ENCODE measurements at regions of chr11 and their contacts with region 1.

Region 1: GRCh38 chr11:94800414-94800813 is 32.3 kb downstream of the AMOTL1 start:
- DNase-seq: peak; percentile 53
- ATAC-seq: peak; percentile 55 to 65

Region 2: DNA sequence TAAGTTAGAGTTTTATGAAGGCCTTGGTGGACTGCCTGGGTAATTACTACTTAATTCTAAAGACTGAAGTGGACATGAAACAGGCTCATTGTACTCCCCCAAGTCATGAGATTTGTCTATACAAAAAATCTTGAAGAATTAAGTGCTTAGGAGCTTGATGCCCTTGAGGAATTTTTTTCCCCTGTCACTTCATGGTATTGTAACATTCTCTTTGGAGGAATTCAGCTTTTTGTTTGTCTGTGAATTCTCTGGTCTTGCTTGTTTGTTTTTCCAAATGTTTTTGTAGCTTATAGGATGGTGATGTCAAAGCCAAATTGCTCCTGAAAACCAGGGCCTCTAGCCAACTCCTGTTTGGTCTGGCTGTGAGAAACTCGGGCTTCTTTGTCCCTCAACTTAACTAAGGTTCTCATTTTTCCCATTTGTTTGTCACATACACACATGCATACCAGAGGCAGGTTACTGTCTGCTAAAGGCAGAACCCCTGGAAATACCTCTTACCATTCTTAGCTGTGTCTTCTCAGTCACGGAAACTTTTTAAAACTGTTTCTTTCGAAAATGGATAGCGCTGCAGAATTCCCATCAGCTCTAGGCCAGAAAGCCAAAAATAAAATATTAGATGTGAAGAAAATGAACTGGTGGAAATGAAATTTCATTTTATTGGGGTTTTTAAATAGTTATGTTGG is 34.6 kb after region 1 on chr11:
- intact Hi-C with region 1: loop called in 1 of 2 experiments (anchors 5 kb)
- DNase-seq: no peak
- ATAC-seq: no peak

Region 3: DNA sequence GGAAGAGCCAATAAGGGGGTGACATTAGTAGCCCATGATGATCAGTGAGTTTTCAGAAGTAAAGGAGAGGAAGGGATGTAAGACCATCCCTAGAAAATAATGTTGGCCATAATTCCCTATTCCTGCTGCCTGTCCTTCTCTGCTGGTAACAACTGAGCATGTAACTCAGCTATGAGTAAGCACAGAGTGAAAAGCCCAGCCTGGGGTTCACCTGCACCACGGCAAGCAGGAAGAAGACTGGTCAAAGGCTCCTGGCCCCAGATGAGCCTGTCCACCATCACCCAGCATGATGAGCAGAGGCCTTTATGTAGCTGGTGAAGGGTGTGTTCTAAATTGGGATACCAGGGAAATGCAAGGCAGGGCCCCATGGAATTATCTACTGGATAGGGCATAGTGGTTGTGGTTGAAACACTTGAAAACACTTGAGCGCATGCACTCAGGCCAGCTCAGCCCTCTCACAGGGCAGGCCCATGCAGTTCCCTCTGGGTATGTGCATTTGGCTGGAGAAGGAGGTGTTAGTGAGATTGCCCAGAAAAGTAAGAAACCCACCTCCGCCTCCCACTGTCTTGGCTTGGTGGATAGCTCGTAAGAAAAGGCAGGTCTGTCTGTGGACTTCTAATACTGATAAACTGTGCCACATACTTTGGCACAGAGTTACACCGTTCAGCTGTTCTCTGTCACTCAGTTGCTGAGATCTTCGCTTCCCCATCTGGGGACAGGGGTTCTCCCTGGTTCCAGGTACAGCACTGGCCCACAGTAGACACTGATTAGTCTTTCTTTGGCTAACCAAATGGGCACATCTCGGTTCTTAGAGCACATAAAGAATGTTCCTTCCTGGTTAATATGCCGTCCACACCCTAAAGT is 54.6 kb after region 1 on chr11:
- intact Hi-C with region 1: loop called in 1 of 2 experiments (anchors 5 kb)
- DNase-seq: no peak
- ATAC-seq: peak; percentile 93 to 95

Region 4: DNA sequence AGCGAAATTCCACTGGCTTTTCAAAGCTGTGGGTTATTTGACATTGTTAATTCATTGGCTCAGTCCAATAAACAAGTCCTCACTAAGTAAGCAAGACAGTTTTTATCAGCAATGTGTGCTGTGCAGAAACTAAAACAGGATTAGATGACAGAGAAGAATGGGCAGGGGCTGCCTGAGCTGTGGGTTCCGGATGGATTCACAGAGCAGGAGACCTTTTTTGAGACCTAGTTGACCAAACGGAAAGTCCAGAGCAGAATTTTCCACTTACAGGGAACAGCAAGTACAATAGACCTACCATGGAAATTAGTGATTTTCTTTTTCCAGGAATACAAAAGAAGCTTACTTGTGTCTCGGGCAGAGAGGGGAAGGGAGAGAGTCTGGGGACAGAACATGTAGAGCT is 243.6 kb after region 1 on chr11:
- intact Hi-C with region 1: no loop called
- DNase-seq: no peak
- ATAC-seq: no peak

Measured in left cardiac atrium (tissue), 4 donors.